ENCODE measurements at regions of chr5 and their contacts with region 1.

Region 1: GRCh38 chr5:106875591-106876297 is 795.0 kb downstream of the EFNA5 start:
- DNase-seq: peak; percentile 20
- ATAC-seq: peak; percentile 56

Region 2: GRCh38 chr5:106269252-106269843 is 606.4 kb before region 1 on chr5:
- intact Hi-C with region 1: loop called (anchors 5 kb)
- DNase-seq: no peak
- ATAC-seq: no peak

Measured in Right ventricle myocardium superior (tissue), 1 donor.